ENCODE measurements at regions of chr22 and their contacts with region 1.

Region 1: DNA sequence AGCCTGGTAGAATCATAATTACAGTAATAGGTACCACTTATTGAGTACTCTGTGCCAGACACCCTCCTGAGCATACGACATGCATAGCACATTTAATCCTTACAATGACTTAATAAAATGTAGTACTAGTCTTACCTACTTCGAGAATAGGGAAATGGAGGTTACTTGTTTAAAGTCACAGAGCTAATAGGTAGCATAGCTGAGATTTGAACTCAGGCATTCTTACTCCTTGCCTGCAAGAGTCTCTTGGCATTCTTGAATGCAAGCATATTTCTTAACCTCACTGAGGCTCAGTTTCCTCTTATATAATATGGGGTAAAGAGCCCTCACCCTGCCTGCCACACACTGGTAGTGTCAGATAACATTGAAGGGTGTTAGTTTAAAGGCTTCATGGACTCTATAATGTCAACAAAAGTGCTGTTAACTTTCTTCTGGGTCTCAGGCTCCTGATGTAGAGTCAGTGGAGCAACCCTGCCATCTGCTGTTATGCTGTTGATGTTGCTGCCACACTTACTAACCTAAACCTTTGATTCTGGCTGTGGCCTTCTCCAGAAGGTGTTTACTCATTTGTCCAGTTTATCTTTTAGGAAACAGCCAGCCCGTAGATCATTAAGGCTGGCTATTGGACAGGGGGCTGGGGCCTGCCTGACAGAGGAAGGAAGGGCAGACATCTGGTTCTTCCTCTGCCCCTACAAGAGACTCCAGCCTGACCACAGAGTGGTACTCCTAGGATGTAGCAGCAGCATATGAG is 18.9 kb downstream of the LIMK2 start:
- DNase-seq: peak; percentile 32 to 85 (median 54)
- ATAC-seq: peak; percentile 92
- H3K4me3 ChIP-seq: no peak overlapping the region
- H3K4me3 Mint-ChIP-seq: peak overlapping the region; percentile 49
- H3K27ac ChIP-seq: peak overlapping the region in 1 of 2 donors; percentile 70
- H3K27ac Mint-ChIP-seq: peak overlapping the region; percentile 90
- H3K4me1 ChIP-seq: peaks cover 28% of the 10 kb centered on the region
- H3K4me1 Mint-ChIP-seq: peaks cover 57% of the 10 kb centered on the region
- H3K27me3 ChIP-seq: no peaks in the 10 kb centered on the region
- H3K27me3 Mint-ChIP-seq: no peaks in the 10 kb centered on the region
- CTCF ChIP-seq: peak; percentile 72

Region 2: DNA sequence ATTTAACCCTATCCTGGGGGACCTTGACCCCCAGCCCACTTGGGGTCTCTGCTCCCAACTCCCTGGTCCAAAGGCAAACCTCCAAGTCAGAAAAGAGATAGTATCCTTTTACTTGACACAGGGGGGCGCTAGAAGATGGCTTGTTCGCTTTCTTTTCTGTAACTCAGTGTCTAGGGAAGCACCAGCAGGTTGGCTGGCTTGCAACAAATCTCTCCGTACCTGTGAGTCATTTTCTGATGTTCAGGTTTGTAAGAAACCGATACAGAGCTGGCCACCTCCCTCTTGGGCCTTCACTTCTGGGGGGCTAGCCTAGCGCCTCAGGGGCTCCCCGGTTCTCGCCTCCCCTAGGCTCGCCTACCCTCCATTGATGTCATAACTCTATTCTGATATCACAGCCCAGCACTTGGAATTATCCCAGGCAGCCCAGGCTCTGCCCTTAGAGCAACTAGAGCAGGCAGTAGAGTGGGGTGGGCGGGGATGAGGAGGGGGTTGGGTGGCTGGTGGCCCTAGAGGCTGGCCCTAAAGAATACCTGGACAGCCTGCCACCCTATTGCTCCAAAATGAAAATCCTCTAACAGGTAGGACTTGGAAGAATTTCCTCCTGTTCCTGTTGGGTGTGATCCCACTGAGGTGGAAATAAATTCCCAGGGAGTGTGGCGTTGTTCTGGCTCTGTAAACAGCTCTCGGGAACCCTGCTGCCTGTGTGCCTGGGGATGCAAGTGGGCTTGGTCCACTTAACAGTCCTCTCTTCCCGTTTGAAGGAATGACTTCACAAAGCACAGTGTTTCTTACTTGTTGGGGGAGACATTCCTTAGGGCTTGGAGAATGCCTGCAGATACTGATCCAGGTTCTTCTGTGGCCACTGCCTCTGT is 467.0 kb before region 1 on chr22:
- CTCF ChIA-PET with region 1: no interaction called
- POLR2A ChIA-PET with region 1: no interaction called
- intact Hi-C with region 1: loop called (anchors 1 kb)
- DNase-seq: peak; percentile 5 to 80 (median 37)
- ATAC-seq: peak; percentile 71
- H3K4me3 ChIP-seq: no peak overlapping the region
- H3K4me3 Mint-ChIP-seq: no peak overlapping the region
- H3K27ac ChIP-seq: no peak overlapping the region
- H3K27ac Mint-ChIP-seq: no peak overlapping the region
- H3K4me1 ChIP-seq: peaks cover 4% of the 10 kb centered on the region
- H3K4me1 Mint-ChIP-seq: no peaks in the 10 kb centered on the region
- H3K27me3 ChIP-seq: no peaks in the 10 kb centered on the region
- H3K27me3 Mint-ChIP-seq: no peaks in the 10 kb centered on the region
- CTCF ChIP-seq: peak; percentile 55

Region 3: DNA sequence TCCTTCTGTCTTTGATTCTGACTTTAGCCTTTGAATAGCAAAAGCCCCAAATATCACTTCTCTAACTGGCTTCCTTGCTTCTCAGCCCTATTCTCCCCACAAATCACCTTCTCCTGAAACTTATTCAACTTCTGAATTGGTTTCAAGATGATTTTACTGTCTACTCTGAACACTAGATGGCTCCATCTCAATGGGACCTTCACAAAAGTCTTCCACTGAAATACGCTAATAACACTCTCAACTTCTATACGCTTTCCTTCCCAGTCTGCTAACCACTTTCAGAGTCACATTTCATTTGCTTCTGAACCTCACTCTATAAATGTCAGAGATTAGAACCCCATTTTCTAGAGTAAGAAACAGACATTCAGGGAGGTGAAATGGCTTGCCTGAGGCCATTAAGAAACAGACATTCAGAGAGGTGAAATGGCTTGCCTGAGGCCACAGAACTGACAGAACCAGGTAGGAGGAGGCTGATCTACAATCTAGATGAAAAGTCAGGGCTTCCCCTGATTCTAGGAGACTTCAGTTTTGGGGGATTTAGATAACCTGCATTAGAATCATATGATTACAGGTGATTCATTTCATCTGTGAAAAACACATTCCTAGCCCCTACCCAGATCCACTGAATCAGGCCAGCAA is 283.1 kb before region 1 on chr22:
- CTCF ChIA-PET with region 1: no interaction called
- POLR2A ChIA-PET with region 1: no interaction called
- intact Hi-C with region 1: loop called (anchors 2 to 5 kb)
- DNase-seq: peak in 3 of 14 experiments; percentile 60 to 66 (median 65)
- ATAC-seq: peak; percentile 49
- H3K4me3 ChIP-seq: no peak overlapping the region
- H3K4me3 Mint-ChIP-seq: no peak overlapping the region
- H3K27ac ChIP-seq: no peak overlapping the region
- H3K27ac Mint-ChIP-seq: no peak overlapping the region
- H3K4me1 ChIP-seq: peaks cover 39% of the 10 kb centered on the region
- H3K4me1 Mint-ChIP-seq: peaks cover 65% of the 10 kb centered on the region
- H3K27me3 ChIP-seq: no peaks in the 10 kb centered on the region
- H3K27me3 Mint-ChIP-seq: no peaks in the 10 kb centered on the region
- CTCF ChIP-seq: peak; percentile 67

Region 4: GRCh38 chr22:31089160-31090100 is 141.6 kb before region 1 on chr22:
- CTCF ChIA-PET with region 1: no interaction called
- POLR2A ChIA-PET with region 1: interaction called, 7 read pairs
- intact Hi-C with region 1: loop called (anchors 1 kb)
- DNase-seq: peak in 11 of 14 experiments; percentile 19 to 68 (median 35)
- ATAC-seq: no peak
- H3K4me3 ChIP-seq: no peak overlapping the region
- H3K4me3 Mint-ChIP-seq: no peak overlapping the region
- H3K27ac ChIP-seq: no peak overlapping the region
- H3K27ac Mint-ChIP-seq: no peak overlapping the region
- H3K4me1 ChIP-seq: peaks cover 14% of the 10 kb centered on the region
- H3K4me1 Mint-ChIP-seq: peaks cover under 1% of the 10 kb centered on the region
- H3K27me3 ChIP-seq: no peaks in the 10 kb centered on the region
- H3K27me3 Mint-ChIP-seq: no peaks in the 10 kb centered on the region
- CTCF ChIP-seq: peak; percentile 68

Region 5: DNA sequence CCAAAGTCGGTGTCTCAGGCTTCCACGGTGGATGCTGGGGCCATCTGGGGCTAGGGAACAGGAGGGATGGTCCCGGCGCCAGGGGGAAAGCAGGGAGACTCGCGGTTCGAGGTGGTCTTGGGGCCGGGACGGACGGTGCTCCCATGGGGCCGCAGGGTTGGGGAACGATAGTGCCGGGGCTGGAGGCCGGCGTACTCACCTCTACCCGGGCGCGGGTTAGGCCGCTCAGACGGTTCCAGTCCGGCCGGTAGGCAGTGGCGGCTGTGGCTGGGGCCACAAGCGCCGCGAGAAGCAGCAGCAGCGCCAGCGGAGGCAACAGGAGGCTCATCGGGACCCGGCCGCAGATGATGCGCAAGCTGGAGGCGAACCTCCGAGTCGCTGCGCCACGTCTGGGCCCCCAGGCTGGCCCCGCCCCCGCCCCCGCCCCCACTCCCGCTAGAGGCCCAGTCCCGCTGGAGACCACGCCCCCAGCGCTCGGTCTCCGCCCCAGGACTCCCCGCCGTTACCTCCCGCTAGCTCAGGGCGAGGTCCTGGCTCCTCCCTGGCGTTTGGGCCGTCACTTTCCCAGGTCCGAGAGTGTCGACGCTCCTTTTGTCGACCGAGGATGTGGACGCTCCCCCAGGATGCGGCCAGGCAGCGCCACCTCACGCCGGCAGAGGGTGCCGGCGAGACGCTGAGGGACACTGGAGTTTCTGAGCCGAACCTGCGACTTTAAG is 123.7 kb before region 1 on chr22 and contains the start of gene SELENOM:
- CTCF ChIA-PET with region 1: interaction called, 7 read pairs
- POLR2A ChIA-PET with region 1: interaction called, 4 read pairs
- intact Hi-C with region 1: loop called in 1 of 2 experiments (anchors 5 kb)
- DNase-seq: peak; percentile 71 to 95 (median 82)
- ATAC-seq: peak; percentile 90
- H3K4me3 ChIP-seq: peak within 1 kb of the TSS; percentile 75
- H3K4me3 Mint-ChIP-seq: peak within 1 kb of the TSS; percentile 97
- H3K27ac ChIP-seq: peak within 1 kb of the TSS; percentile 24 to 51
- H3K27ac Mint-ChIP-seq: peak within 1 kb of the TSS; percentile 87
- H3K4me1 ChIP-seq: peaks cover 31% of the 10 kb centered on the region
- H3K4me1 Mint-ChIP-seq: peaks cover 24% of the 10 kb centered on the region
- H3K27me3 ChIP-seq: no peaks in the 10 kb centered on the region
- H3K27me3 Mint-ChIP-seq: no peaks in the 10 kb centered on the region
- CTCF ChIP-seq: peak; percentile 70
- total RNA-seq, gene SELENOM: 78.0 to 82.4 TPM

Region 6: DNA sequence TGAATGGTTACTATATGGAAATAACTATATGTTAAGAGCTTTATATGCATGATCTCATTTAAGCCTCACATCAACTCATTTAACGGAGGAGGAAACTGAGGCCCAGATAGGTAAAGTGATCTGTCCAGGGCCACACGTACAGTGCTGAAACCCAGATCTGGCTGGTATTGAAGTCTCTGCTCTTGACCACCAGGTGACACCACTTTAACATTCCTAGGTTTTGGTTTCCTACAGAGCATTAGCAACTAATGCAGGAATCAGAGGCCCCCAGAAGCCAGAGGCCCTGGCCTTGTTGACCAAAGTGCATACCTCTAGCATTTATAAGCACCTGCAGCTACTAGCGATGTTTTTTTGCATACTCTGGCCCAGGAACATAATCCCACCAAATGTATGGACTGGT is 31.9 kb before region 1 on chr22:
- CTCF ChIA-PET with region 1: interaction called, 4 read pairs
- POLR2A ChIA-PET with region 1: interaction called, 4 read pairs
- intact Hi-C with region 1: loop called in 1 of 2 experiments (anchors 5 kb)
- DNase-seq: peak in 3 of 14 experiments; percentile 7 to 26 (median 19)
- ATAC-seq: no peak
- H3K4me3 ChIP-seq: no peak overlapping the region
- H3K4me3 Mint-ChIP-seq: no peak overlapping the region
- H3K27ac ChIP-seq: no peak overlapping the region
- H3K27ac Mint-ChIP-seq: no peak overlapping the region
- H3K4me1 ChIP-seq: no peaks in the 10 kb centered on the region
- H3K4me1 Mint-ChIP-seq: no peaks in the 10 kb centered on the region
- H3K27me3 ChIP-seq: no peaks in the 10 kb centered on the region
- H3K27me3 Mint-ChIP-seq: no peaks in the 10 kb centered on the region
- CTCF ChIP-seq: no peak

Measured in CD4-positive, alpha-beta T cell (primary cell).